ENCODE measurements at regions of chr11 and their contacts with region 1.

Region 1: GRCh38 chr11:105469931-105470330 is 139.9 kb upstream of the GRIA4 start:
- DNase-seq: no peak
- ATAC-seq: no peak
- H3K4me3 ChIP-seq: no peak overlapping the region
- H3K27ac ChIP-seq: no peak overlapping the region
- H3K4me1 ChIP-seq: peaks cover 0 to 3% (median 0%) of the 10 kb centered on the region in 9 donors
- H3K27me3 ChIP-seq: no peaks in the 10 kb centered on the region
- CTCF ChIP-seq: no peak

Region 2: GRCh38 chr11:105407101-105407500 is 62.8 kb before region 1 on chr11:
- intact Hi-C with region 1: loop called in 1 of 10 experiments (anchors 10 kb)
- DNase-seq: no peak
- ATAC-seq: no peak
- H3K4me3 ChIP-seq: no peak overlapping the region
- H3K27ac ChIP-seq: no peak overlapping the region
- H3K4me1 ChIP-seq: no peaks in the 10 kb centered on the region
- H3K27me3 ChIP-seq: no peaks in the 10 kb centered on the region
- CTCF ChIP-seq: no peak